Caco-2 (cell line): ENCODE measurements at regions of chr11 and their contacts with region 1.

Region 1: GRCh38 chr11:121194731-121195596 is 93.9 kb downstream of the TECTA start:
- DNase-seq: peak; percentile 58 to 84
- H3K4me3 ChIP-seq: no peak overlapping the region
- H3K4me3 Mint-ChIP-seq: no peak overlapping the region
- H3K27ac Mint-ChIP-seq: no peak overlapping the region
- H3K4me1 ChIP-seq: no peaks in the 10 kb centered on the region
- H3K4me1 Mint-ChIP-seq: no peaks in the 10 kb centered on the region
- H3K27me3 ChIP-seq: no peaks in the 10 kb centered on the region
- H3K27me3 Mint-ChIP-seq: peaks cover 24% of the 10 kb centered on the region
- CTCF ChIP-seq: peak; percentile 92 to 94

Region 2: GRCh38 chr11:120985718-120986569 is 209.0 kb before region 1 on chr11:
- CTCF ChIA-PET with region 1: no interaction called
- POLR2A ChIA-PET with region 1: no interaction called
- intact Hi-C with region 1: no loop called
- DNase-seq: peak; percentile 72 to 79
- H3K4me3 ChIP-seq: peak overlapping the region; percentile 38
- H3K4me3 Mint-ChIP-seq: peak overlapping the region; percentile 73
- H3K27ac Mint-ChIP-seq: no peak overlapping the region
- H3K4me1 ChIP-seq: no peaks in the 10 kb centered on the region
- H3K4me1 Mint-ChIP-seq: peaks cover 5% of the 10 kb centered on the region
- H3K27me3 ChIP-seq: no peaks in the 10 kb centered on the region; the same call in 1 of the 2 replicates
- H3K27me3 Mint-ChIP-seq: peaks cover 34% of the 10 kb centered on the region
- CTCF ChIP-seq: peak; percentile 42 to 61

Region 3: DNA sequence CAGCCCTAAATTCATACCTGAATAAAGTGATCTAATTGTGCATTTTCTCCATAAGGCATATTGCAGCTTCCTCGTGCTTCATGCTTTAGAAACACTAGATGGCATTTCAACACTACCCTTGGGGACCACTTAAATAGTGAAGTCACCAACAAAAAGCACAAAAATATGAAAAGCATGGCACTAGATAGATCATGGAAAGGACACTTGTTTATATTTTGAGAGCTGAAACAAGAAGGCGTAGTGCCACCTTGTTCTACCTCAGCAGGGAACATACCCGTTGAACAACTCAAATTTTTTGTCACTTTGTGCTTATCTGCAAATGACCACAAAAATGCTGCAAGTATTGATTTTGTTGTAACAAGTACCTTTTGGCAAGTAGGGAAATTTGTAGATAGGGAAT is 162.4 kb before region 1 on chr11:
- CTCF ChIA-PET with region 1: interaction called, 14 read pairs
- POLR2A ChIA-PET with region 1: no interaction called
- intact Hi-C with region 1: loop called (anchors 1 kb)
- DNase-seq: no peak
- H3K4me3 ChIP-seq: no peak overlapping the region
- H3K4me3 Mint-ChIP-seq: no peak overlapping the region
- H3K27ac Mint-ChIP-seq: no peak overlapping the region
- H3K4me1 ChIP-seq: no peaks in the 10 kb centered on the region
- H3K4me1 Mint-ChIP-seq: peaks cover 22% of the 10 kb centered on the region
- H3K27me3 ChIP-seq: no peaks in the 10 kb centered on the region
- H3K27me3 Mint-ChIP-seq: no peaks in the 10 kb centered on the region
- CTCF ChIP-seq: peak; percentile 26 to 48

Region 4: GRCh38 chr11:121119440-121119839 is 75.5 kb before region 1 on chr11:
- CTCF ChIA-PET with region 1: interaction called, 10 read pairs
- POLR2A ChIA-PET with region 1: no interaction called
- intact Hi-C with region 1: no loop called
- DNase-seq: peak in 1 of 2 experiments; percentile 20
- H3K4me3 ChIP-seq: no peak overlapping the region
- H3K4me3 Mint-ChIP-seq: no peak overlapping the region
- H3K27ac Mint-ChIP-seq: no peak overlapping the region
- H3K4me1 ChIP-seq: no peaks in the 10 kb centered on the region
- H3K4me1 Mint-ChIP-seq: no peaks in the 10 kb centered on the region
- H3K27me3 ChIP-seq: no peaks in the 10 kb centered on the region
- H3K27me3 Mint-ChIP-seq: peaks cover 11% of the 10 kb centered on the region
- CTCF ChIP-seq: peak; percentile 22 to 42